Motor neuron (in vitro differentiated cells): ENCODE measurements at regions of chr4 and their contacts with region 1.

Region 1: DNA sequence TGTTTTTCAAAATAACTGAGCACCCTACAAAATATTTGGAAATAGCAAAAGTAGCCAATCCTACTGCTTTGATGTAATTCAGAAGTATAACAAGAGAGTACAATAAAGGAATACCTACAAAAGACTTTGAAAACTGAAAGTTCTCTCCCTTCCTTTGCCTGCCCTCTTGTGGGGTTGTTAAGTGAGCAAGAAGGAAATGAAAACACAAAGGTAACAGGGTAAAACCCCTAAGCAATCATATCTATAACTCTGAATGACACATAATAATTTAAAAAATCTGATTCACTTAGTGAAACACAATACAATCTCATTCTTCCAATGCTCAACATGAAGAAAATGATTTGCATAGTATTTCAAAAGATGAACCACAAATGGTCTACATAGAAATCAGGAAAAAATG is 98.2 kb downstream of the FRYL start:
- ATAC-seq: peak in 1 of 8 experiments; percentile 43
- H3K4me3 ChIP-seq: no peak overlapping the region
- H3K27ac ChIP-seq: no peak overlapping the region
- H3K4me1 ChIP-seq: peaks cover 0 to 2% of the 10 kb centered on the region in 2 donors

Region 2: DNA sequence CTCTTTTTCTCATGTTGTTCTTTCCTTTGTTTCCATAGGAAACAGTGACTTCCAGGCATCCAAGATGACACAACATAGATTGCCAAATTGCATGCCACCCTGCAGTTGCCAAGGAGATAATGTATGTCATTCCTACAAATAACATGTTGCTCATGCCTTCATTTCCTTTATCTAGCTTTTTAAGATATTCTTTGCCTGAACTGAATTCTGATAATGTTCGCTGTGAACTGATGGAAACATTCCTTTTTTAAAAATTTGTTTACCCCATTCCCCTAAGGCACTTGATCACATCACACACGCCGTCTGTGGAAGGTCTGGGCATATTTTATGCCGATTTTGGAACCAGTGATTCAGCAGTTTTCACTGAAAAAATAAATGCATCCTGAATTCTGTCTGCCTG is 1734.9 kb before region 1 on chr4:
- in situ Hi-C with region 1: no loop called
- ATAC-seq: peak in 6 of 8 experiments; percentile 39 to 87 (median 78)
- H3K4me3 ChIP-seq: no peak overlapping the region
- H3K27ac ChIP-seq: no peak overlapping the region
- H3K4me1 ChIP-seq: peaks cover 0 to 7% of the 10 kb centered on the region in 2 donors

Region 3: DNA sequence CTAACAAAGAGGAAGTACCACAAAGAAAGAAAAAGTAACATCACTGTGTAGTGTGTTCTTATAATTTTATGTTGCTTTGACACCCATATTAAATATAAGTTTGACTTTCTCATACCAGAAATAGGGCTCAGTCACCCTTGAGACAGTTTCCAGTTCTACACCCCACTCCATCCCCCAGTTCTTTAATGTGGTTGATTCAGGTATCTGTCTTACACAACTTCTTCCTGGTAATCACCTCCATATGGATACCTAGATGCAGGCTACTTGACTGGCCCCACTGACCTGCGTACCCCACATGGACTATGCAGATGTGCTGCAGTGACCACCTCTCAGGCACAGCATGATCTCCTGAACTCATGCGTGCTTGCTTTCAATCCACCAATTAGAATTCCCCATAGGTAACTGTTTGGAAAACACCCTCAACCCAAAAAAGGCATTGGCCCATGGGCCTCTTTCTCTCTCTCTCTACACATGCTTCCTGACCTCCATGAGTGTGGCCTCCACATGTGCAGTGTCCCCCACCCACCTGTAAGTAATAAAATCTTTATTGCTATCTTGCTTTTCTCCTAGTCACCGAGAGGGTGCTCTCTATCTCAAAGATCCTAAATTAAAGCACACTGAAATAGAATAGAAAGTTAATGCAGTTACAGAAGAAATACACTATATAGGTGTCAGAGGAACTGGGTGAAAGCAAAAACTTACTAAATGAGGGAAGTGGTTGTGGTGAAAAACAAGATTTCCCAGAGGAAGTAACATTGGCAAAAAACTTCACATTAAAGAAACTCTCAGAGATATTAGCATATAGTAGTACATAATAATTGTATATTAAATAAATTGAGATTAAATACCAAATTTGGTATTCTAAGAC is 93.4 kb before region 1 on chr4:
- in situ Hi-C with region 1: loop called in 1 of 9 experiments (anchors 10 kb)
- ATAC-seq: peak in 3 of 8 experiments; percentile 44 to 50 (median 48)
- H3K4me3 ChIP-seq: no peak overlapping the region
- H3K27ac ChIP-seq: no peak overlapping the region
- H3K4me1 ChIP-seq: no peaks in the 10 kb centered on the region